ENCODE measurements at regions of chr15 and their contacts with region 1.

Region 1: DNA sequence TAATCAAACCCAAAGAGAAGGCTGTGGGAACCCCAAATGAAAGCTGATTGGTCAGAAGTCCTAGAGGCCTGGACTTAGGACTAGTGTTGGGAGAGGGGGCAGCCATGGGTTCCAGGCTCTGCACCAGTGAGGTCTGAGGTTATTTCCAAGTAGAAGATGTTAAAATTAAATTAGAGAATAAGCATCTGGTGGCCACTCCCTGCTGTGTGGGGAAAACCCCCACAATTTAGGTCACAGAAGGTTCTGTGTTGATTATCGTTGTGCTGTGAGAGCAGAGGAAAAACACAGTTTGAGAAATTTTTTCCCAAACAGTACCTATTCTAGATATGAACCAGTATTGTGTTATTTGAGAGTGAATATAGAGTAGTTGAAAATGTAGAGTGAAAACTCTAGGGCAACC is 53.9 kb upstream of the NSMCE3 start:
- DNase-seq: no peak
- ATAC-seq: no peak
- H3K4me3 Mint-ChIP-seq: no peak overlapping the region
- H3K27ac Mint-ChIP-seq: no peak overlapping the region
- H3K4me1 Mint-ChIP-seq: no peaks in the 10 kb centered on the region
- H3K27me3 Mint-ChIP-seq: peaks cover 16% of the 10 kb centered on the region

Region 2: DNA sequence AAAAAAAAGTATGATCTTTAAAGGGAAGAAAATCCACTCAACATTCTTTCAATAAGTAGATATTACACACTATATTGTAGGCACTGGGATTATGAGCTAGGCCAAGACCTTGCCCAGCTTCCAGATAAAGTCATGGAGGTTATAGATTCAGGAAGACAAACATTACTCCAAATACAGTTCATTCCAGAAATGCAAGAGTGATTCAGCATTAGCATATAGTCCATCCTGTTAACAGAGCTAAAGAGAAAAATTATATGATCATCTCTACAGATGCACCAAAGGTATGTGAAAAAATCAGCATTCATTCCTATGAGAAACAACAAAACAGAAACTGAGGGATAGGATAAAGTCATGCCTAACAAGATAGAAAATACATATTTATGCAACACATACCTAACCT is 11.9 kb before region 1 on chr15:
- CTCF ChIA-PET with region 1: no interaction called
- POLR2A ChIA-PET with region 1: no interaction called
- intact Hi-C with region 1: loop called in 1 of 2 experiments (anchors 1 kb)
- DNase-seq: no peak
- ATAC-seq: no peak
- H3K4me3 Mint-ChIP-seq: no peak overlapping the region
- H3K27ac Mint-ChIP-seq: no peak overlapping the region
- H3K4me1 Mint-ChIP-seq: no peaks in the 10 kb centered on the region
- H3K27me3 Mint-ChIP-seq: peaks cover 2% of the 10 kb centered on the region